Activated CD4-positive, alpha-beta T cell treated with anti-CD3 and anti-CD28 coated beads for 36 hours (primary cell): ENCODE measurements at regions of chr6 and their contacts with region 1.

Region 1: GRCh38 chr6:138987640-138988468 is at the start of gene REPS1:
- DNase-seq: peak; percentile 95
- ATAC-seq: peak; percentile 96
- H3K4me3 Mint-ChIP-seq: peak within 1 kb of the TSS; percentile 87
- H3K27ac Mint-ChIP-seq: peak within 1 kb of the TSS; percentile 91
- H3K4me1 Mint-ChIP-seq: peaks cover 6% of the 10 kb centered on the region
- H3K27me3 Mint-ChIP-seq: no peaks in the 10 kb centered on the region
- total RNA-seq, gene REPS1: 60.3 to 90.9 TPM

Region 2: DNA sequence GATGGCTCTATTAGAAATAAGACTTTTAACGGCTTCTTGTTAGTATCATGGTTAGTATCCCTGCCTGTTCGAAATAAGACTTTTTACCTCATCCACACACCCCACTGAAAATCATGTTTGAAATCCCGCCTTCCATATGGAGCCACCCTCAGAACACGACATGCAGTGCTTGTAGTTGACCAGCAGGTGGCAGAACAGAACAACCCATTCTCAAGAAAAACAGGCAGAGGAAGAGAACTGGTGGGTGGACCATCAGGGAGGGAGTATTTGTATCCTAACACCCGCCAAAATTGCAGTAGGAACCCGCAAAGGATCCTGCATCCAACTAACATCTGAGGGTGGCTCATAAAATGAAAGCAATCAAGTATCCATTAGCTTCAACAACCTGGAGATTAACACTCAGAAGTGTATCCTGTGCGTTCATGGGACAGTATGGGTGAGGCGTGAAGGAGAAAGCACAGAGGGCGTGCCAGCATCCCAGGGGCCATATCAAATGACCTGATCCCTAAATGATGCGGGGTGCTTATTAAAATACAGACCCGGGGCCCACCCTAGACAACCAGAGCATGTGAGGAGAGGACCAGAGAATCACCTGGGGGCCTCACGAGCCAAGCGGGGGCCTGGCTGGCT is 398.9 kb before region 1 on chr6:
- CTCF ChIA-PET with region 1: no interaction called
- POLR2A ChIA-PET with region 1: no interaction called
- intact Hi-C with region 1: loop called in 1 of 2 experiments (anchors 2 kb)
- DNase-seq: peak; percentile 67
- ATAC-seq: peak; percentile 11
- H3K4me3 Mint-ChIP-seq: no peak overlapping the region
- H3K27ac Mint-ChIP-seq: no peak overlapping the region
- H3K4me1 Mint-ChIP-seq: peaks cover 28% of the 10 kb centered on the region
- H3K27me3 Mint-ChIP-seq: no peaks in the 10 kb centered on the region

Region 3: DNA sequence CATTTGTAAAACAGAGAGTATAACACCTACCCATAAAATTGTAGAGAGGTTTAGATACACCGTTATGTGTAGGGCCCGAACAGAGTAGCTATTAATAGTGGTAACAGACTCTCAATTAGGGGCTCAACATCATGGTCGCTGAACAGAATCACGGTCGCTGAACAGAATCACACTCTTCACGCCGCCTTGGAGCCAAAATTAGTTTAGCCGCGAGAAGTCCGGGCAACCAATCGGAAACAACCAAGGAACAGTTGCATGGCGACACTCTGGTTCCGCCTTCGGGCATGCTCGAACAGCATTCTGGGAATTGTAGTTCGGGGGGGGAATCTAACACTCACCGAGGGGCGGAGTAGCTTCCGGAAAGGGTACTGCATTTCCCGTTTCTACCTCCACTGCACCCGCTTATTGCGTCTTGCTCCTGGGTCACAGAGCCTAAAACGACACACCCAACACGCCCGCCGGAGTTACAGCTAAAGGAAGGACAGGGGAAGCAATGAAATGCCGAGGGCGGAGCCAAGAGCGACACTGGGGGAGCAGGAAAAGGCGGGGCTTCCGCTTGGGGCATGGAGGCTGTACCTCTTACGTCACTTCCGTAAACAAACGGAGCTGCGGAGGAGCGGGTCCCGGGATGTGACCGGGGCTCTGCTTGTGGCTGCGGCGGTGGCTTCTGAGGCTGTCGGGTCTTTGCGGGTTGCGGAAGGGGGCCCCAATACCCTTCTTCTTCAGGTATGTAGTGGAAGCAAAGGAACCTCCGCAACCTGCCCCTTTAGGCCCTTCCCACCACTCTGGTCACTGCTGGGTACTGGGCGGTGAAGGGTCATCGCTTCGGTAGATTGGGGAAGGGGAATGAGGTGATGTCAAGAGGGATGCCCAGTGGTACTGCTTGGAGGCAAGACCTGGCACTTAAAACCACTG is 214.4 kb before region 1 on chr6 and contains the start of gene CCDC28A:
- CTCF ChIA-PET with region 1: no interaction called
- POLR2A ChIA-PET with region 1: interaction called, 4 read pairs
- intact Hi-C with region 1: loop called in 1 of 2 experiments (anchors 1 kb)
- DNase-seq: peak; percentile 95
- ATAC-seq: peak; percentile 91
- H3K4me3 Mint-ChIP-seq: peak within 1 kb of the TSS; percentile 84
- H3K27ac Mint-ChIP-seq: peak within 1 kb of the TSS; percentile 98
- H3K4me1 Mint-ChIP-seq: peaks cover 31% of the 10 kb centered on the region
- H3K27me3 Mint-ChIP-seq: no peaks in the 10 kb centered on the region
- total RNA-seq, gene CCDC28A: 14.8 to 16.8 TPM

Region 4: GRCh38 chr6:138944412-138944811 is 43.4 kb before region 1 on chr6:
- CTCF ChIA-PET with region 1: interaction called, 5 read pairs
- POLR2A ChIA-PET with region 1: no interaction called
- intact Hi-C with region 1: loop called (anchors 1 to 2 kb)
- DNase-seq: peak; percentile 44
- ATAC-seq: no peak
- H3K4me3 Mint-ChIP-seq: no peak overlapping the region
- H3K27ac Mint-ChIP-seq: no peak overlapping the region
- H3K4me1 Mint-ChIP-seq: peaks cover 45% of the 10 kb centered on the region
- H3K27me3 Mint-ChIP-seq: no peaks in the 10 kb centered on the region

Region 5: DNA sequence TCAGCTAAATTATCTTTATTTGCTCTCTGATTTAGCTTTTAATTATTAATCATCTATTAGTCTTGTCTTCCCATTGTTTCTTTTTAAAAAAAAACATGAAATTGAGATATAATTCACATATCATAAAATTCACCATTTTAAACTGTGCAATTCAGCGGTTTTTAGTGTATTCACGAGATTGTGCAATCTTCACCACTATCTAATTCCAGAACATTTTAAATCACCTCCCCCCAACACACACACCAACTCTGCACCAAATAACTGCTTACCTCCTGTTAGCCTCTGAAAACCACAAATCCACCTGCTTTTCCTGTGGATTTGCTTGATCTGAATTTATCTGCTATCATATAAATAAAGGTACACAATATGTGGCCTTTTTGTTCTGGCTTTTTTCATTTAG is 31.9 kb after region 1 on chr6:
- CTCF ChIA-PET with region 1: interaction called, 4 read pairs
- POLR2A ChIA-PET with region 1: no interaction called
- intact Hi-C with region 1: loop called in 1 of 2 experiments (anchors 2 kb)
- DNase-seq: no peak
- ATAC-seq: no peak
- H3K4me3 Mint-ChIP-seq: no peak overlapping the region
- H3K27ac Mint-ChIP-seq: no peak overlapping the region
- H3K4me1 Mint-ChIP-seq: no peaks in the 10 kb centered on the region
- H3K27me3 Mint-ChIP-seq: no peaks in the 10 kb centered on the region

Region 6: DNA sequence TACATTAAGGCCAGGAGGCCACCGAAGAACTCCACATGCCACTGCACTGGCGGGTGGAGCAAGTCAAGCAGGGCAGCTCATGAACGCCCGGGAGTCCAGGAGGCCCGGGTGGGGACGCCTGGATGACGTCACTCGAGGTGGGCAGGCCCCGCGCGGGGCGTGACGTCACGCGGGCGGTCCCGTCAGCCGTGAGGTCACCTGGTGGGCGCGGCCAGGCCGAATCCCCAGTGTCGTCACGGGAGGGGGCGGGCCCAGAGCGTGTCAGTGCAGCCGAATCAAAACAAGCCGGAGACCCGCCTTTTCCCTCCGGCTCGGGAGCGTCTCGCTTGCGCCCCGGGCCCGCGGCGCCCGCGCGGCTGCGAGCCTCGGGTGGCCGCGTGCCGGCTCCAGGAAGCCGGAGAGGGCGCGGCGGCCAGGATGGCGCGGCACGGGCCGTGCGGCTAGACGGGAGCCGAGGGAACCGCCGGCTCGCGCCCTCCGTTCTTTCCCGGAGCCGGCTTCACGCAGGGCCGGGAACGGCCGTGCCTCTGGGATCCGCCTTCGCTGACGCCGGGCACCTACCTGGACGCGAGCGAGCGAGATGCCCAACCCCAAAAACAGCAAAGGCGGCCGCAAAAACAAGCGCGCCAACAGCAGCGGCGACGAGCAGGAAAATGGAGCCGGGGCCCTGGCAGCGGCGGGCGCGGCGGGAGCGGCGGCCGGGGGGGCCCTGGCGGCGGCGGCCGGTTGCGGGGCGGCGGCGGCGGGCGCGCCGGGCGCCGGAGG is 147.1 kb after region 1 on chr6 and contains the start of gene HECA:
- CTCF ChIA-PET with region 1: interaction called, 3 read pairs
- POLR2A ChIA-PET with region 1: no interaction called
- intact Hi-C with region 1: loop called in 1 of 2 experiments (anchors 5 kb)
- DNase-seq: peak; percentile 100
- ATAC-seq: peak; percentile 70
- H3K4me3 Mint-ChIP-seq: peak within 1 kb of the TSS; percentile 93
- H3K27ac Mint-ChIP-seq: peak within 1 kb of the TSS; percentile 98
- H3K4me1 Mint-ChIP-seq: peaks cover 49% of the 10 kb centered on the region
- H3K27me3 Mint-ChIP-seq: no peaks in the 10 kb centered on the region
- total RNA-seq, gene HECA: 51.6 to 63.4 TPM